Activated CD4-positive, alpha-beta T cell treated with anti-CD3 and anti-CD28 coated beads, Interleukin-2, amount 10 ng/mL, durations not matched to agents 7 days and 5 days (primary cell): ENCODE measurements at regions of chr2 and their contacts with region 1.

Region 1: DNA sequence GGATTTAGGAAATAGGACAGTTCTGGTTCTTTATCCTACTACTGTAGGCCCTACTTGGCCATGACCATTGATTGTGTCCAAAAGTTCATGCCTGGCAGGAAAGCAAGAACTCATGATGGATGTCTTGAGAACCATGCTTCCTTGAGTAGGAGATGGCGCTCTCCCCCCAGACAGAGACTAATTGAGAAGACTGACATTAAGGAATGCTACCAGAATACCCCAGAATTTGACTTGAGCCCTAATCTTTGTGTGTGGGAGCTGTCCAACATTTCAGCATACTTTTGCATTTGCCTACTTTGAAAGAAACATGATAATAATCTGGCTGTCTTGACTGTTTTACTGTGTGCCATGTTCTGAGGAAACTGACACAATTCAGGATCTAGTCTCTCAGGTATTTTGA is 23.3 kb downstream of the MAPRE3 start:
- DNase-seq: no peak
- H3K4me3 Mint-ChIP-seq: no peak overlapping the region
- H3K27ac Mint-ChIP-seq: no peak overlapping the region
- H3K4me1 Mint-ChIP-seq: no peaks in the 10 kb centered on the region
- H3K27me3 Mint-ChIP-seq: no peaks in the 10 kb centered on the region

Region 2: DNA sequence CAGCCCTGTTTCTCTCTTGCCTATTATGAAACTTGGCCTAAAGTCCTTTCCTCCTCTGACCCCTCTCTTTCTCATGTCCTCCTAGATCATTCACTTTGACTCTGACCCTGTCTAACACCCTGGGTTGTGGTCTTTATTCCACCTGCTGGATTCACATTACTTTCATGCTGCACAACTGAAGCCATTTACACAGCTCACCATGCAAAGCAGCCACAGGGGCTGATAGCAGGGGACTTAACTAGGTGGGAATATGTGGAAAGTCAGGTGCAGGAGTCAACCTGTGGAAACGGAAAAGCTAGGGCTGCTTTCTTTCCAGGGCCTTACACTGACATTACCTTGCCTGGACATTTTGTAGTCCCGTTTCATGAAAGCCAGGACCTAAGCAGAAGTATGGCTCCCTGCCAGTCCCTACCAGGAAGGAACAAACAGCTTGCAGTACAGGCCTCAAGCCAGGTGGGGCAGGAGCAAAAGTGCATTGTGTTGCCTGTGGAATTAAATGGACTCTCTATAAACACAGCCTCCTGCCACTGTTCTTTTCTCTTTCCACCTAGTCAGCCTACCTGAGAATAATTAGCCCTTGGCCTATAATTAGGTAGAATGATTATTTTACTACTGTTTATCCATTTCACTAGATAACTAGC is 11.5 kb before region 1 on chr2:
- CTCF ChIA-PET with region 1: interaction called, 11 read pairs
- POLR2A ChIA-PET with region 1: no interaction called
- DNase-seq: peak; percentile 25
- H3K4me3 Mint-ChIP-seq: no peak overlapping the region
- H3K27ac Mint-ChIP-seq: no peak overlapping the region
- H3K4me1 Mint-ChIP-seq: no peaks in the 10 kb centered on the region
- H3K27me3 Mint-ChIP-seq: peaks cover 11% of the 10 kb centered on the region